CD4-positive, alpha-beta T cell (primary cell): ENCODE measurements at regions of chr20 and their contacts with region 1.

Region 1: GRCh38 chr20:41095110-41095969 is 42.0 kb upstream of the PLCG1 start:
- DNase-seq: peak; percentile 22 to 82 (median 46)
- ATAC-seq: peak; percentile 75
- H3K4me3 ChIP-seq: no peak overlapping the region
- H3K4me3 Mint-ChIP-seq: no peak overlapping the region
- H3K27ac ChIP-seq: no peak overlapping the region
- H3K27ac Mint-ChIP-seq: peak overlapping the region; percentile 4
- H3K4me1 ChIP-seq: no peaks in the 10 kb centered on the region
- H3K4me1 Mint-ChIP-seq: peaks cover 6% of the 10 kb centered on the region
- H3K27me3 ChIP-seq: no peaks in the 10 kb centered on the region
- H3K27me3 Mint-ChIP-seq: no peaks in the 10 kb centered on the region
- CTCF ChIP-seq: peak; percentile 98

Region 2: DNA sequence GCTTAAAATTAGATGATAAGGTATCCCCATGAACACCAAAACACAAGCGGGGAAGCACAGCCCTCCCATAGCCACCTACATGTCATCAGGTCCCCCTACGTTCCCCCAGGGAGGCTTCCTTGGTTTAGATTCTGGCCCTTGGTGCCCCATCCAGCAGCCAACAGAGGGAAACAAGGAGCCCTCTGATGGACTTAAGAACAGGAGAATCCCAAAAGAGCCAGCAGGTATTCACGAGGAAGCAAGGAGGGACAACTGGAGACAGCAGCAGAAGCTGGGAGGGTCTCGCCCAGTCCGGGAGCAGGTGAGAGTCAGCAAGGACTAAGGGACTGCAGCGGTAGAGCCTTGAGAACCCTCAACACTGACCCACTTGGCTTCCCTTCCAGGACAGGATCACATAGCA is 125.1 kb before region 1 on chr20:
- CTCF ChIA-PET with region 1: interaction called, 27 read pairs
- POLR2A ChIA-PET with region 1: no interaction called
- intact Hi-C with region 1: loop called (anchors 1 kb)
- DNase-seq: no peak
- ATAC-seq: no peak
- H3K4me3 ChIP-seq: no peak overlapping the region
- H3K4me3 Mint-ChIP-seq: no peak overlapping the region
- H3K27ac ChIP-seq: no peak overlapping the region
- H3K27ac Mint-ChIP-seq: no peak overlapping the region
- H3K4me1 ChIP-seq: peaks cover 9% of the 10 kb centered on the region
- H3K4me1 Mint-ChIP-seq: peaks cover 11% of the 10 kb centered on the region
- H3K27me3 ChIP-seq: no peaks in the 10 kb centered on the region
- H3K27me3 Mint-ChIP-seq: peaks cover 7% of the 10 kb centered on the region
- CTCF ChIP-seq: no peak

Region 3: DNA sequence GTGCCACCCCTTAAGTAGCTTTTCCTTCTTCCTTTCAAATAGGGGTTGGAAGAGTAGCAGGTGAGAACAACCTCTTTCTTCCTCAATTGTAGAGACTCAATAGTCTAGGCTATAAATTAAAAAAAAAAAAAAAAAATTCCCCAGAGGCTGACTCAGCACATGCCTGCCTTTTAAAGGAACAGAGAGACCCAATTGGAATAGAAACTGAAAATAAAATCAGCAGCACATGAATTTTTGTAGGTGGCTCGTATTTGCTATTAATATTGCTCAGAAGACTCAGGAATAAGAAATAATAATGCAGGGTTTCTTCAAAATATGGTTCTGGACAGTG is 47.4 kb before region 1 on chr20:
- CTCF ChIA-PET with region 1: no interaction called
- POLR2A ChIA-PET with region 1: no interaction called
- intact Hi-C with region 1: loop called in 1 of 2 experiments (anchors 5 kb)
- DNase-seq: peak in 3 of 14 experiments; percentile 61 to 70 (median 63)
- ATAC-seq: peak; percentile 71
- H3K4me3 ChIP-seq: peak overlapping the region; percentile 37
- H3K4me3 Mint-ChIP-seq: peak overlapping the region; percentile 80
- H3K27ac ChIP-seq: peak overlapping the region; percentile 54 to 56
- H3K27ac Mint-ChIP-seq: peak overlapping the region; percentile 69
- H3K4me1 ChIP-seq: peaks cover 54% of the 10 kb centered on the region
- H3K4me1 Mint-ChIP-seq: peaks cover 94% of the 10 kb centered on the region
- H3K27me3 ChIP-seq: no peaks in the 10 kb centered on the region
- H3K27me3 Mint-ChIP-seq: no peaks in the 10 kb centered on the region
- CTCF ChIP-seq: no peak

Region 4: DNA sequence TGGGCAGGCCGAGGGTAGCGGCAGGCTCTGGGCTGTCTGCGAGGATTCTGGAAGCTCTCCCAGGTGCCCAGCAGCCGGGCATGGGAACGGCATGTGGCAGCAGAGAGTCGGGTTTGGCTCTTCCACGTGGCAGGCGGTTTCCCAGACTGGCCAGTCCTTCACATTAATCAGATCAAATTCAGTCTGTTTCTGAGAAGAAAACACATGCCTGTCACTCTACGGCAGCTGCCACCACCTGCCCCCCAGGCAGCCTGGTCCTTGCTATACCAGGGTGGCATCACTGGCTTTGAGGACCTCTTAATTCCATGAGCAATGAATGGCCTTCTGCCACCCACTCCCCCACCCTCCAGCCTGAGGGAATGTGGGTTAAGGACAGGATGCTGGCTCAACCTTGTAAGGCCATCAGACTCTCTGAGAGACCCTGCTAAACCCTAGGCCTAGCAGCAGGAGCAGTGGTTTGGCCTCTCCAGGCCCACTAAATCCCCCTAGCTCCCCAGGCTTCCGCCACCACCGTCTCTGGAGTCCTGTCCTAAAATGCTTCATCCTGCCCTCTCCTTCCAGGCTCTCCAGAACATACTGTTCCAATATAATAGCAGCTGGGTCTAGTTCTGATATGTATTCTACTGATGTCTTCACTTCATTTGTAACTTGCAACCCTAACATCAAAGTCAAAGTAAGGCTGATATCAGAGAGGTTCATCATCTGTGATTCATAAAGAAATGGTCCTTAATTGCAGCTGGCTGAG is 89.8 kb after region 1 on chr20:
- CTCF ChIA-PET with region 1: no interaction called
- POLR2A ChIA-PET with region 1: no interaction called
- intact Hi-C with region 1: no loop called
- DNase-seq: no peak
- ATAC-seq: no peak
- H3K4me3 ChIP-seq: no peak overlapping the region
- H3K4me3 Mint-ChIP-seq: no peak overlapping the region
- H3K27ac ChIP-seq: no peak overlapping the region
- H3K27ac Mint-ChIP-seq: peak overlapping the region; percentile 30
- H3K4me1 ChIP-seq: peaks cover 3% of the 10 kb centered on the region
- H3K4me1 Mint-ChIP-seq: peaks cover 13% of the 10 kb centered on the region
- H3K27me3 ChIP-seq: no peaks in the 10 kb centered on the region
- H3K27me3 Mint-ChIP-seq: no peaks in the 10 kb centered on the region
- CTCF ChIP-seq: no peak

Region 5: GRCh38 chr20:41329435-41330342 is 234.3 kb after region 1 on chr20:
- CTCF ChIA-PET with region 1: no interaction called
- POLR2A ChIA-PET with region 1: no interaction called
- intact Hi-C with region 1: no loop called
- DNase-seq: peak; percentile 15 to 74 (median 49)
- ATAC-seq: peak; percentile 100
- H3K4me3 ChIP-seq: no peak overlapping the region
- H3K4me3 Mint-ChIP-seq: no peak overlapping the region
- H3K27ac ChIP-seq: no peak overlapping the region
- H3K27ac Mint-ChIP-seq: no peak overlapping the region
- H3K4me1 ChIP-seq: peaks cover 12% of the 10 kb centered on the region
- H3K4me1 Mint-ChIP-seq: peaks cover 11% of the 10 kb centered on the region
- H3K27me3 ChIP-seq: no peaks in the 10 kb centered on the region
- H3K27me3 Mint-ChIP-seq: no peaks in the 10 kb centered on the region
- CTCF ChIP-seq: no peak